ENCODE measurements at regions of chr3 and their contacts with region 1.

Region 1: DNA sequence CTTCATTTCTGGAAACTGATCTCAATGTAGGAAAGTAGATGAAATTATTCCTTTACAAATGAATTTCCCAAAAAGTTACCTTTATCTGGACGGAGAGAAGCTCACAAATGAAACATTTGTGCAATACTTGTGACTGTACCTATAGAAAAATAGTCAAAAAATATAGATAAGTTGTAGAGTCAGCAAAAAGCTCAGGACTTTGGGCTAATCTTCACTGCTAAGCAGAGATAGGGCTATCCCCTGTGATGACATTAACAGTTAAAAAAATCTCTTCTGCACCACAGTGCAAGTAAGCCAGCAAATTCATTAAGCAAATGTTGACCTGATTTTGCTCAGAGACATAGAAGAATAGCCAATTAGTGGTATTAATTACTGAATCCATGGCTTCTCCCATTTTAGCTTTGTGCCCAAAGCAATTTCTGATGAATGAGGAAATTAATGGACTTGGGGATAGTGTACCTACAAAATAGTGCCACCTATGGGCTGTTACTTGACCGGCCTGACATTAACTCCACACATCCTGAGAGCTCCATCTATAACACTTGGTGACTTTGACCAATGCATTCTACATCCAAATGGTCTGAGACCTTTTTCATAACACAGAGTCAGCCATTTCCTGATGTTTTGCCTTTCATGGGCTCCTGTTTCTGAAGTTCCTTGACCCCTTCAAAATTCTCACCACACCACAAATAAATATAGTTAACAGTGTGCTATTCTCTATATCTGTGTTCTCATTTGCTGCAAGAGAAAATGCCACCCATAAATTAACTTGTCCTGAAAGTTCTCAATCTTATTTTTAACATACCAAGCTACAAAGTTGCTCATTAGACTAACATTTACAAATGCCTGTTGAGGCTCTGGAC is 105.0 kb downstream of the SSR3 start:
- DNase-seq: no peak
- H3K4me3 ChIP-seq: no peak overlapping the region
- H3K27ac ChIP-seq: no peak overlapping the region
- H3K4me1 ChIP-seq: no peaks in the 10 kb centered on the region
- H3K27me3 ChIP-seq: no peaks in the 10 kb centered on the region
- CTCF ChIP-seq: peak in 2 of 3 experiments; percentile 62 to 75; a peak in 3 of 4 replicates
- EP300 ChIP-seq: no peak
- POLR2A ChIP-seq: no peak
- RAD21 ChIP-seq: peak; percentile 47 to 60

Region 2: GRCh38 chr3:156174229-156174847 is 275.6 kb before region 1 on chr3:
- CTCF ChIA-PET with region 1: interaction called, 16 read pairs
- POLR2A ChIA-PET with region 1: no interaction called
- DNase-seq: no peak
- H3K4me3 ChIP-seq: no peak overlapping the region
- H3K27ac ChIP-seq: no peak overlapping the region
- H3K4me1 ChIP-seq: no peaks in the 10 kb centered on the region
- H3K27me3 ChIP-seq: no peaks in the 10 kb centered on the region
- CTCF ChIP-seq: peak in 2 of 3 experiments; percentile 43 to 62; a peak in 3 of 4 replicates
- EP300 ChIP-seq: no peak
- POLR2A ChIP-seq: no peak
- RAD21 ChIP-seq: peak; percentile 80 to 84

Region 3: DNA sequence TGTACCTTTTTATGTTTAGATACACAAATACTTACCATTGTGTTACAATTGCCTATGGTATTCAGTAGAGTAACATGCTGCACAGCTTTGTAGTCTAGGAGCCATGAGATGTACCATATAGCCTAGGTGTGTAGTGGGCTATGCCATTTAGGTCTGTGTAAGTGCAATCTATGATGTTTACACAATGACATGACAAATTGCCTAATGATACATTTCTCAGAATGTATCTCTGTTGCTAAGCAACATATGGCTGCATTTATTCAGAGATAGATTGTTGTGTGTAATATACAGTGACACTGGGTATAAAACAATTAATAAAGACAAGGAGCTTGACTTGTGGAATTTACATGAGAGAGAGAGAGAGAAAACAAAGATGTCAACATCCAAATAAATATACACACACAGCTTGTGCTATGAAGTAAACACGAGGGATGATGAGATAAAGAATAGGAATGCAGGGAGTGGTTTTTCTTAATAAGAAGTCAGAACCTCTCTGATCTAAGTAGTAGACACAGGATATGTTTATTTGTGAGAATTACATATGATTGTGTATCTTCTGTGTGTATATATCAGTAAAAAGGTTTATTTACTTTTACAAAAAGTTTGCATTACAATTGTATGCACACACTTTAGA is 219.6 kb before region 1 on chr3:
- CTCF ChIA-PET with region 1: no interaction called
- POLR2A ChIA-PET with region 1: no interaction called
- DNase-seq: no peak
- H3K4me3 ChIP-seq: no peak overlapping the region
- H3K27ac ChIP-seq: no peak overlapping the region
- H3K4me1 ChIP-seq: no peaks in the 10 kb centered on the region
- H3K27me3 ChIP-seq: no peaks in the 10 kb centered on the region
- CTCF ChIP-seq: no peak
- EP300 ChIP-seq: no peak
- POLR2A ChIP-seq: no peak
- RAD21 ChIP-seq: no peak

Region 4: GRCh38 chr3:156433138-156433537 is 16.8 kb before region 1 on chr3:
- CTCF ChIA-PET with region 1: interaction called, 16 read pairs
- POLR2A ChIA-PET with region 1: no interaction called
- DNase-seq: no peak
- H3K4me3 ChIP-seq: no peak overlapping the region
- H3K27ac ChIP-seq: no peak overlapping the region
- H3K4me1 ChIP-seq: no peaks in the 10 kb centered on the region
- H3K27me3 ChIP-seq: no peaks in the 10 kb centered on the region
- CTCF ChIP-seq: no peak
- EP300 ChIP-seq: no peak
- POLR2A ChIP-seq: no peak
- RAD21 ChIP-seq: no peak

Region 5: GRCh38 chr3:156474560-156475389 is 24.8 kb after region 1 on chr3:
- CTCF ChIA-PET with region 1: interaction called, 228 read pairs
- POLR2A ChIA-PET with region 1: no interaction called
- DNase-seq: no peak
- H3K4me3 ChIP-seq: peak overlapping the region in 2 of 4 experiments; percentile 10 to 38; a peak in 2 of 8 replicates
- H3K27ac ChIP-seq: no peak overlapping the region
- H3K4me1 ChIP-seq: no peaks in the 10 kb centered on the region
- H3K27me3 ChIP-seq: no peaks in the 10 kb centered on the region
- CTCF ChIP-seq: peak; percentile 46 to 66 (median 66)
- EP300 ChIP-seq: no peak
- POLR2A ChIP-seq: no peak
- RAD21 ChIP-seq: peak; percentile 54 to 66

Measured in H1 (cell line).